ENCODE measurements at regions of chr2 and their contacts with region 1.

Region 1: GRCh38 chr2:119476301-119477021 is 44.8 kb downstream of the TMEM37 start:
- DNase-seq: no peak
- ATAC-seq: peak; percentile 94
- H3K4me3 ChIP-seq: no peak overlapping the region
- H3K27ac ChIP-seq: no peak overlapping the region
- H3K4me1 ChIP-seq: no peaks in the 10 kb centered on the region
- H3K27me3 ChIP-seq: no peaks in the 10 kb centered on the region
- CTCF ChIP-seq: peak; percentile 88 to 97 (median 91)
- EP300 ChIP-seq: no peak
- POLR2A ChIP-seq: no peak
- RAD21 ChIP-seq: peak; percentile 95

Region 2: DNA sequence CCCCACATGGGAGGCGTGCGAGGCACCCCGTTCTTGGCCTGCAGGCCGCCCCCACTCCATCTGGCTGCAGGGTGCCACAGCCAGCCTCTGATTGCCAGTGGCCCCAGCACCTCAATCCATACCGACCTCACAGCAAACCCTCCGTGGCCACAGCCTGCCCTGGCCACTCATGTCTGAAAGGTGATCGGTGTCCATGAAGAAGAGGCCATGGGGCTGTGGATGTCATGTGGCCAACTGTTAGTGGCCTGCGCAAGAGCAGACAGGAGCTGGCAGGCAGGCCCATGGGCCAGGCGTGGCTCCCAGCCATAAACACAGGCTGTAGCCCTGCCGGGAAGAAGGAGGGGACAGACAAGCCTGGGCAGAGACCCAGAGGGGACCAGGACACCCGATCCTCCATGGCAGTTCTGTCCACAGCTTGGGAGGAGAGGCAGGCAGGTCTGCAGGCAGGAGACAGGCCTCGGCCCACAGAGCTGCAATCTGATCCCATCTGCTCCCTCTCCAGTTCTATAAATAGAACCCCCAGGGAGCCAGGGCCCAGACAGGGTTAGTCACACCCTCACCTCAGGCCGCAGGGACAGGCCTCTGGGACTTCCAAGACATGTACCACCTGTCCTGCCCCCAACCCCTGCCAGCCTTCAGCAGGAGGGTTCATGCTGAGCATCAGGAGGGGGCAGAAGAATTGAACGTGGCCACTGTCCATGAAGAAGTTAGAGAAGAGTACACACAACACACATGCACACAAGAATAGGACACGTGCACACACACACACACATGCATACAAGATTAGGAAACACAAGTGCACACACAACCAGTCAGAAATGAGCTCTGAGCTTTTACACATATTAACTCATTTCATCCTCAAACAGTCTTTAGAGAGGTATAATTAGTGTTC is 235.9 kb before region 1 on chr2:
- CTCF ChIA-PET with region 1: no interaction called
- POLR2A ChIA-PET with region 1: no interaction called
- RAD21 ChIA-PET with region 1: no interaction called
- SMC1A ChIA-PET with region 1: no interaction called
- in situ Hi-C with region 1: no loop called
- intact Hi-C with region 1: no loop called
- DNase-seq: no peak
- ATAC-seq: no peak
- H3K4me3 ChIP-seq: no peak overlapping the region
- H3K27ac ChIP-seq: no peak overlapping the region
- H3K4me1 ChIP-seq: peaks cover 17% of the 10 kb centered on the region; the same call in 1 of the 2 replicates
- H3K27me3 ChIP-seq: no peaks in the 10 kb centered on the region
- CTCF ChIP-seq: no peak
- EP300 ChIP-seq: no peak
- POLR2A ChIP-seq: no peak
- RAD21 ChIP-seq: no peak

Region 3: DNA sequence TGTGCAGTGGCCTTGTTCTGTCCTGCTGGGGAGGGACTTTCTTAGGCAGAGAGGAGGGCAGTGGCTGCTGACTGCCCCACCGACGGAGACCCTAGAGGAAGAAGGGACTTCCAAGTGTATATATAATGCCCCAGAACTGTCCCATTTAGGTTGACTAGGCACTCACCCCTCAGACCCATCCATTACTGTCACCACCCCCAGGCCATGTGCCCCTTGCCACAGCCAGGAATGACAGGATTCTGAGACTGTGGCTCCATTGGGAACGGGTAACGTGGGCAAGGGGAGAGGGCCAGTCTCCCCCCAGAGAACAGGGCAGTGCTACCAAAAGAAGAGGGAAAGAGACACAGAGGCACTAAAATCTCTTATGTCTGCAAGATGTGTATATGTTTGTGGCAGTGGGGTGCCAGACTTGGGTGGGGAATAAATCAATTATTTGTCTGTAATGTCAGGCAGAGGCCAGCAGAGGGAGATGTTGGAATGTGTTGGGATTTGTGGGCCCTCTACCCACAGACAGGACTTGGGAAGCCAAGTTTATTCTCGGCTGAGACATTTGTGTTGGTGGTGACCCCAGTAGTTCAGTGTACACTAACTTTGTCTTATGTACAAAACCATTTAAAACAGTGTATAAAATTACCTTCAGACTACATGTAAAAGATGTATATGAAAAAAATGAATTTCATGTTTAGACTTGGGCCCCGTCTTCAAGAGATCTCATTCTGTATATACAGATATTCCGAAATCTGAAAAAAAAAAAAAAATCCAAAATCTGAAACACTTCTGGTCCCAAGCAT is 68.8 kb before region 1 on chr2:
- CTCF ChIA-PET with region 1: interaction called, 187 read pairs
- POLR2A ChIA-PET with region 1: no interaction called
- RAD21 ChIA-PET with region 1: interaction called, 75 read pairs
- SMC1A ChIA-PET with region 1: interaction called, 62 read pairs
- in situ Hi-C with region 1: no loop called
- intact Hi-C with region 1: loop called (anchors 1 kb)
- DNase-seq: peak; percentile 32
- ATAC-seq: peak; percentile 91
- H3K4me3 ChIP-seq: no peak overlapping the region
- H3K27ac ChIP-seq: no peak overlapping the region
- H3K4me1 ChIP-seq: no peaks in the 10 kb centered on the region
- H3K27me3 ChIP-seq: no peaks in the 10 kb centered on the region
- CTCF ChIP-seq: peak; percentile 67 to 88 (median 73)
- EP300 ChIP-seq: no peak
- POLR2A ChIP-seq: no peak
- RAD21 ChIP-seq: peak; percentile 83

Region 4: DNA sequence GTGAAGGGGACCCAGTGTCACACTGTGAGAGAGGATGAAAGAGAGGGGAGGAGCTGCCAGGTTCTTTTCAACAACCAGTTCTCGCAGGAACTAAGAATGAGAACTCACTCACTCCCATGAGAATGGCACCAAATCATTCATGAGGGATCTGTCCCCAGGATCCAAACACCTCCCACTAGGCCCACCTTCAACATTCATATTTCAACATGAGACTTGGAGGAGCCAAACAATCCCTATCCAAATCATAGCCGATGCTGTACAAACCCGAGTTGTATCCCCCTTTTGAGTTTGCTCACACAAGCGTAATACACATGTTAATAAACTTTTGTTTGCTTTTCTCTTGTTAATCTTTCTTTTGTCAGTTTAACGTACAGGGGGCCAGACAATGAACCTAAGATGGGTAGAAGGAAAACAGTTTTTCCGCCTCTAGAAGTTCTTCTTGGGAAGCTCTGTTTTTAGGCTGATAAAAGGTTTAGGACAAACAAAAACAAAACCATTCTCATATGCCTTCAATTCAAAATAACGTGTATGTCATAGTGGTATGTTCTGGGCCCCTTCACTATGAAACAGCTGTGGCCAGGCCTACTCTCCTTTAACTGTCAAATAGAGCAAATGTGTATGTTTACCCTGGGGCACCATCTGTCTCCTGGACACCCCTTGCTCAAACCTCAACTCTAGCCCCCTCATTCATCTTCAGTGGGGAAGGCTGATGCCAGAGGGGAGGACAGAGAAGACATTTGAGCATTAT is 53.9 kb before region 1 on chr2:
- CTCF ChIA-PET with region 1: interaction called, 31 read pairs
- POLR2A ChIA-PET with region 1: no interaction called
- RAD21 ChIA-PET with region 1: no interaction called
- SMC1A ChIA-PET with region 1: no interaction called
- in situ Hi-C with region 1: no loop called
- intact Hi-C with region 1: no loop called
- DNase-seq: no peak
- ATAC-seq: no peak
- H3K4me3 ChIP-seq: no peak overlapping the region
- H3K27ac ChIP-seq: no peak overlapping the region
- H3K4me1 ChIP-seq: no peaks in the 10 kb centered on the region
- H3K27me3 ChIP-seq: peaks cover 0 to 2% of the 10 kb centered on the region in 2 experiments; a peak in 1 of 4 replicates
- CTCF ChIP-seq: no peak
- EP300 ChIP-seq: no peak
- POLR2A ChIP-seq: no peak
- RAD21 ChIP-seq: no peak

Region 5: DNA sequence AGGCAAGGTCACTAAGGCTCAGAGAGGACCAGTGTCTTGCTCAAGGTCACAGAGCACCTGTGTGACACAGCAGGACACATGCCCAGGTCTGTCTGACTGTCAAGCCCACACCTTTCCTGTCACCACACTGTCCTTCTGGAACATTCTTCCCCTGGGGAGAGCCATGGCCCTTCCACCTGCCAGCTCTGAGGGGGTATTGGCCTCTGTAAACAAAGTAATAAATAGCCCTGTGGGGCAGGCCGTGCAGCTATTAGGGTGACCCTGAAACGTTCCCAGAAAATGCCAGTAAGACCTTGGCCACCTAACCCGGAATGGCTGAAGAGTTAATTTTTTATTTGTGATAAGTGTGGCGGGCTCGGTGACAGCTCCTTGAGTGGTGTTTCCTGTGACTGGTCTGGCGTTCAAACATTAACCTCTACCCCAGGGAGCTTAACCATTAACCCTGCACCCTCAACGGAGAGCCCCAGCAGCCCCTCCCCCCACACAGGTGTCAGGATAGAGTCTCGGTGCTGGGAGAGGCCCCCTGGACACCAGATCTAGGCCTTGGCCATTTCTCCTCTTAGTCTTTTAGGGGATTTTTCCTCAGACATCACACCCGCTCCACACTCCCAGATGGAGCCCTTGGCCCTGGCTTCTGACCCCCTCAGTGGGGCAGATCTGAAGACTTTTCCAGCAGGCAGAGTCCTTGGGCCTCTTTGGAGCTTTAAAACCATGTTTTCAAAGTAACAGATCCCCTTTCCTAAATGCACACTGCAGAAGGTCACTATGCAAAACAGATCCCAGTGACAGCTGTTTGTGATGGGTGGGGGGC is 11.2 kb after region 1 on chr2:
- CTCF ChIA-PET with region 1: interaction called, 31 read pairs
- POLR2A ChIA-PET with region 1: no interaction called
- RAD21 ChIA-PET with region 1: interaction called, 8 read pairs
- SMC1A ChIA-PET with region 1: interaction called, 10 read pairs
- in situ Hi-C with region 1: no loop called
- intact Hi-C with region 1: no loop called
- DNase-seq: peak; percentile 34
- ATAC-seq: peak; percentile 88
- H3K4me3 ChIP-seq: no peak overlapping the region
- H3K27ac ChIP-seq: no peak overlapping the region
- H3K4me1 ChIP-seq: no peaks in the 10 kb centered on the region
- H3K27me3 ChIP-seq: no peaks in the 10 kb centered on the region; a peak in 1 of 4 replicates
- CTCF ChIP-seq: no peak
- EP300 ChIP-seq: peak in 1 of 2 experiments; percentile 46; a peak in 1 of 4 replicates
- POLR2A ChIP-seq: no peak
- RAD21 ChIP-seq: no peak

Region 6: DNA sequence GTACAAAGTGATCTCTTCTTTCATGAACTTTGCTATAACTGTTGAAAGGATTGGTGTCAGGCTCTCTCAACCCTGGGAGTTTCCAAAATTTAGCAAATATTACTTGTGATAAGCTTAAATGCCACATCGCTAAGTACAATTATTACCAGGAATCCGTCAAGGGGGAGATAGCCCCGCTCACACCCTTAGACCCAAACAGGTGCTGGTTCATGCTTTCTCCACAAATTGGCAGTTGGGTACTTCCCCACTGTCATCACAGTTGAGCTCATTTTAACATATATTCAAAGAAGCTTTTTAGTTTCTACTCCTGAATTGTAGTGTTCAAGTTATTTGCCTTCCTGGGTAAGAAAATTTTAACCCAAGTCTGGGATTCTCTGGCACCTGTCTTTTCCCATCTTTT is 506.6 kb after region 1 on chr2:
- CTCF ChIA-PET with region 1: no interaction called
- POLR2A ChIA-PET with region 1: no interaction called
- RAD21 ChIA-PET with region 1: no interaction called
- SMC1A ChIA-PET with region 1: no interaction called
- in situ Hi-C with region 1: no loop called
- intact Hi-C with region 1: no loop called
- DNase-seq: no peak
- ATAC-seq: peak; percentile 32; the same call in 1 of the 3 replicates
- H3K4me3 ChIP-seq: no peak overlapping the region
- H3K27ac ChIP-seq: no peak overlapping the region
- H3K4me1 ChIP-seq: no peaks in the 10 kb centered on the region
- H3K27me3 ChIP-seq: no peaks in the 10 kb centered on the region
- CTCF ChIP-seq: no peak
- EP300 ChIP-seq: no peak
- POLR2A ChIP-seq: no peak
- RAD21 ChIP-seq: no peak

Measured in GM12878 (cell line).